Transverse colon (tissue), 4 donors: ENCODE measurements at regions of chr12 and their contacts with region 1.

Region 1: DNA sequence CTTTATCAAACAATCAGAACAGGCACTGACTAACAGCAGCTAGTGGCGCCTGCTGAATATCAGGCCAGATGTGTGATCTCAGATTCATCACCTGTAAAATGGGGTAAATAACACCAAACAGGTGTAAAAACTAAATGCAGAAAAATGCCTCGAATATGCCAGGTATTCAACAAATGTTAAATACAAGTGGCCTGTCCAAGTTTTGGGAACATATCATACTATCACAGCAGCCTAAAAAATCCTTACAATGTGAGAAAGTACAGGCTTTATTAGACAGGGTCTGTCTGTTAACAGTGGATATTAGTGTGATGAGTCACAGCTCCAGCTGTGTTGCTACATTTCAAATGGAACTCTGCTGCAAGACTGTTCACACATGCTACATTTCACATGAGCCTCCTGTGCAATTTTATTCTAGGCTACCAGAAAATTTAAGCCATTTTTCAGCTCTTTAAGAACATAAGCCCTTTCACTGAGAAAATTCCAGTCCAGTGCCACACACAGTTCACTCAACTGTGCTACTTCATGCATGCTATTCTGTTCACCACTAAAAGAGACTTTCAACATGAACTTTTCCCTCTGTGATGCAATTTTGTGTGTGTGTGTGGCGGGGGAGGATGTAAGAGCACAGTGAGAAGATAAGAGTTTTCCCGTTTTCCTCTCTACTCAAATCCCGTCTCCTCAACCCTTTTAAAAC is 56.7 kb downstream of the MSRB3 start:
- DNase-seq: no peak
- H3K4me3 ChIP-seq: no peak overlapping the region
- H3K27ac ChIP-seq: peak overlapping the region in 3 of 4 donors; percentile 4 to 21 (median 19)
- H3K4me1 ChIP-seq: peaks cover 0 to 4% (median 0%) of the 10 kb centered on the region in 4 donors
- H3K27me3 ChIP-seq: no peaks in the 10 kb centered on the region
- CTCF ChIP-seq: no peak
- EP300 ChIP-seq: no peak
- POLR2A ChIP-seq: no peak

Region 2: GRCh38 chr12:64469455-64470142 is 865.6 kb before region 1 on chr12:
- in situ Hi-C with region 1: no loop called
- intact Hi-C with region 1: loop called (anchors 10 kb)
- DNase-seq: no peak
- H3K4me3 ChIP-seq: no peak overlapping the region
- H3K27ac ChIP-seq: no peak overlapping the region
- H3K4me1 ChIP-seq: no peaks in the 10 kb centered on the region
- H3K27me3 ChIP-seq: no peaks in the 10 kb centered on the region
- CTCF ChIP-seq: no peak
- EP300 ChIP-seq: no peak
- POLR2A ChIP-seq: no peak